ENCODE measurements at regions of chr20 and their contacts with region 1.

Region 1: DNA sequence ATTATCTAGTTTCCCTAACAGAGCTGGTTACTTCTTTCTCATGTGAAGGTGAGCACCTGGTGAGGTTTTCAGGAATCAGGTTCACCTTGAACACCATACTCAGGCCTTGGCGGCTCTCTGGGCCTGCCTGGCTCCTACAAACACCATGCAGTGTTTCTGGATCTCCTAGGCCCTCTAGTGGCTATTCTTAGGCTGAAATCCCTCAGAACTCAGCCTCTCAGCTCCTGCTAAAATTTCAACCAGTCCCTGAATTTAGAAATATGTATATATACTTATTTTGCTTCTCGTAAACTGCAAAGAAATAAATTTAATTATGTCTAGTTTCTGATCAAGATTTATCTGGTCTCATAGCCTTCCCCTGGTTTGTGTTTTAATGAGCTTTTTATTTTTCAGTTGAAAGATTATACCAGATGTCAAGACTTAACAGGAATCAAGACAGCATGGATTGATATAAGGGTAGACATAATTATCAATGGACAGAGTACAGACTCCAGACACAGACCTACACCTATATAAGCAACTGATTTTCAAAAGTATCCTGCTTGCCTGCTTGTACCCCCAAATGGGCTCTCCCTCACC is 55.9 kb downstream of the ANKEF1 start:
- DNase-seq: peak; percentile 26
- CTCF ChIP-seq: peak; percentile 57

Region 2: GRCh38 chr20:10047427-10047826 is 43.2 kb before region 1 on chr20:
- CTCF ChIA-PET with region 1: interaction called, 12 read pairs
- POLR2A ChIA-PET with region 1: no interaction called
- DNase-seq: no peak
- CTCF ChIP-seq: no peak

Region 3: DNA sequence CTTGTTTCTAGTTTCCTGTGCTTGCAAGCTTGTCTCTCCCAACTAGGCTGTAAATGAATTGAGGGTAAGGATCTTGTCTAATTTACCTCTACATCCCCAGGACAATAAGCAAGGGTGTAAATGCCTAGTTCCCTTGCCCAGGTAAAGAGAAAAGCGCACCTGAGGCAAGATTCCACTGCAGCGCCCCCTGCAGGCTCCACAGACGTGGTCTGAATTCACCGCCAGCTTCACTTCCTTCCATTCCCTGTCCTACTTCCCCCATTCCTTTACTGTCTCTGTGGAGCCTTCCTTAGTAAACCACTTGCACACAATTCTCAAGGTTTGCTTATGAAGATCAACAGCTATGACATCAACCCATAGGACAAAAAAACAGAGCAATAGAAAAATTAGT is 13.6 kb before region 1 on chr20:
- CTCF ChIA-PET with region 1: interaction called, 32 read pairs
- POLR2A ChIA-PET with region 1: no interaction called
- DNase-seq: no peak
- CTCF ChIP-seq: no peak

Region 4: DNA sequence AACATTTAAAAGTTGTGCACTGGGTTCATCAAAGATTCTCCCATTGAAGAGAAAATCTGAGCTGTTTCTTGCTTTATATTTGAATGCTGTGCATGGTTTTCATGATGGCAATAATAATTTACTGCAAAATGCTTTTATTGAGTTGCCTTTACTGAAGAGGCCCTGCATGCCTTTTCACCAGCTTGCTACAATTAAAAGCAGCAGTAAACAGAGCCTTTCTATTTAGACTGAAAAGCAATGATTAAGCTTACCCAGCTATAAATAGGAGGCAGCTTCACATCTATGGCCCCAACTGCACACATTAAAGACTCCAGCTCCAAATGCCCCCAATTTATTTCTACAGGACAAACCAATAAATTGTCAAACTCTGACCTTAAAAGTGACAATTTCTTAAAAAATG is 14.4 kb after region 1 on chr20:
- CTCF ChIA-PET with region 1: interaction called, 38 read pairs
- POLR2A ChIA-PET with region 1: no interaction called
- DNase-seq: no peak
- CTCF ChIP-seq: no peak

Region 5: GRCh38 chr20:10192171-10192570 is 101.5 kb after region 1 on chr20:
- CTCF ChIA-PET with region 1: no interaction called
- POLR2A ChIA-PET with region 1: no interaction called
- DNase-seq: no peak
- CTCF ChIP-seq: no peak

Measured in GM10248 (cell line).